Activated naive CD4-positive, alpha-beta T cell treated with anti-CD3 and anti-CD28 coated beads for 36 hours (primary cell): ENCODE measurements at regions of chr3 and their contacts with region 1.

Region 1: GRCh38 chr3:73029321-73029796 is 32.1 kb upstream of the EBLN2 start:
- DNase-seq: no peak
- H3K4me3 Mint-ChIP-seq: no peak overlapping the region
- H3K27ac Mint-ChIP-seq: peak overlapping the region; percentile 10
- H3K4me1 Mint-ChIP-seq: peaks cover 80% of the 10 kb centered on the region
- H3K27me3 Mint-ChIP-seq: no peaks in the 10 kb centered on the region

Region 2: GRCh38 chr3:73007992-73008712 is 21.2 kb before region 1 on chr3:
- CTCF ChIA-PET with region 1: no interaction called
- intact Hi-C with region 1: loop called (anchors 2 kb)
- DNase-seq: no peak
- H3K4me3 Mint-ChIP-seq: no peak overlapping the region
- H3K27ac Mint-ChIP-seq: no peak overlapping the region
- H3K4me1 Mint-ChIP-seq: peaks cover 87% of the 10 kb centered on the region
- H3K27me3 Mint-ChIP-seq: no peaks in the 10 kb centered on the region

Region 3: DNA sequence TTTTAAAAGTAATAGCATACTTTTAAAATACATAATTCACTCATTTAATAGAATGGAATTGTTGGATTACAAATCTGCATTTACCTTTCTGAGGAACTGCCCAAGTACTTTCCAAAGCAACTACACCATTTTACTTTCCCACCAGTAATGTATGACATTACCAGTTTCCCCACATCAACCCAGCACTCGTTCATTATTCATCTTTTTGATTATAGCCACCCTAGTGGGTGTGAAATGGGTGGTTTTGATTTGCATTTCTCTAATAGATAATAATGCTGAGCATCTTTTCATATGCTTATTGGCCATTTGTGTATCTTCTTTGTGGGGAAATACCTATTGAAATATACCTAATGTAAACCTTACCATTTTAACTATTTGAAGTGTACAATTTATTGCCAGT is 14.1 kb after region 1 on chr3:
- CTCF ChIA-PET with region 1: interaction called, 3 read pairs
- intact Hi-C with region 1: loop called (anchors 2 kb)
- DNase-seq: no peak
- H3K4me3 Mint-ChIP-seq: no peak overlapping the region
- H3K27ac Mint-ChIP-seq: no peak overlapping the region
- H3K4me1 Mint-ChIP-seq: peaks cover 67% of the 10 kb centered on the region
- H3K27me3 Mint-ChIP-seq: no peaks in the 10 kb centered on the region

Region 4: GRCh38 chr3:73143821-73144237 is 114.5 kb after region 1 on chr3:
- CTCF ChIA-PET with region 1: no interaction called
- intact Hi-C with region 1: no loop called
- DNase-seq: no peak
- H3K4me3 Mint-ChIP-seq: no peak overlapping the region
- H3K27ac Mint-ChIP-seq: no peak overlapping the region
- H3K4me1 Mint-ChIP-seq: no peaks in the 10 kb centered on the region
- H3K27me3 Mint-ChIP-seq: no peaks in the 10 kb centered on the region